ENCODE measurements at regions of chr17 and their contacts with region 1.

Region 1: DNA sequence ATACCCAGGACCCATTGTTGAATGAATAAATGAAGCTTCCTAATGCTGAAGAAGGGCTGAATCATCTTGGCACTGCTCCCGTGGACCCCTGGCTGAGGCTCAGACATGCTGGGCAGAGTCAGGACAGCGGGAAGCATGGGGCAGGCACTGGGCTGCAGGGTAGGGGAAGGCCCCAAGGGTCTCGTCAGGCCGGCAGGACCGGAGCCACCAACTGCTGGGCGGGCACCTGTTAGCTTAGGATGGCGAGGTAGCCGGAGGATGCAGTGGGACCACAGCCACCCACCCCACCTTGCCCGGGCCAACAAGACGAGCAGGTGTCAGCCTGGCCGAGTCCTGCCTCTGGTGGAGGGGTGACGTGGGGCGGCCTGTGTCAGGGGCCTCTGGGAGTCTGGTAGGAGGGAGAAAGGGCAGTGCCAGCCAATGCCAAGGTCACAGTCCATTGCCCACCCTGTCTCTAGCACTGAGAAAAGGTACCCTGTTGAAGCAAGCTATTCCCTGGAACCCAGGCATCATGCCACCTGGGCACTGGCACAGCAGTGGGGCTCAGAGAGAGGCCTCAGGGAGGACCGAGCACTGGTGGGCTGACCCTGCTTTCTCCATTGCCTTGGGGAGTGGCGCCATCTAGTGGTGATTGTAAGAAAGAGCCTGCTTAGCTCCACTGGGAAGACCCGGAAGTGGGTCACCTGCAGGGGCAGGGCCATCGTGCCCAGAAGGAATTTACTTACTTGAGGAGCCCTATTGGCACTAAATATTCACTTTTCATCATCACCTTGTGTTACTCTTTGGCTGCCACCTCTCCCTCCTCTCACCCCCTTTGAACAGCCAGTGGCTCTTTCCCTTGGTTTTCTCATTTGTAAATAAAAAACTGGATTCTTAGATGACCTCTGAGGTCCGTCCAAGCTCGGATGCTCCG is 3.0 kb upstream of the DLX3 start:
- DNase-seq: peak; percentile 58 to 91
- H3K4me3 ChIP-seq: no peak overlapping the region
- H3K27ac ChIP-seq: no peak overlapping the region
- H3K4me1 ChIP-seq: peaks cover 3 to 29% (median 11%) of the 10 kb centered on the region in 4 experiments; a peak in 6 of 7 replicates
- H3K27me3 ChIP-seq: peaks cover 32 to 66% (median 52%) of the 10 kb centered on the region in 4 experiments
- CTCF ChIP-seq: peak; percentile 72 to 94 (median 92)
- EP300 ChIP-seq: no peak
- POLR2A ChIP-seq: no peak
- RAD21 ChIP-seq: peak; percentile 99

Region 2: DNA sequence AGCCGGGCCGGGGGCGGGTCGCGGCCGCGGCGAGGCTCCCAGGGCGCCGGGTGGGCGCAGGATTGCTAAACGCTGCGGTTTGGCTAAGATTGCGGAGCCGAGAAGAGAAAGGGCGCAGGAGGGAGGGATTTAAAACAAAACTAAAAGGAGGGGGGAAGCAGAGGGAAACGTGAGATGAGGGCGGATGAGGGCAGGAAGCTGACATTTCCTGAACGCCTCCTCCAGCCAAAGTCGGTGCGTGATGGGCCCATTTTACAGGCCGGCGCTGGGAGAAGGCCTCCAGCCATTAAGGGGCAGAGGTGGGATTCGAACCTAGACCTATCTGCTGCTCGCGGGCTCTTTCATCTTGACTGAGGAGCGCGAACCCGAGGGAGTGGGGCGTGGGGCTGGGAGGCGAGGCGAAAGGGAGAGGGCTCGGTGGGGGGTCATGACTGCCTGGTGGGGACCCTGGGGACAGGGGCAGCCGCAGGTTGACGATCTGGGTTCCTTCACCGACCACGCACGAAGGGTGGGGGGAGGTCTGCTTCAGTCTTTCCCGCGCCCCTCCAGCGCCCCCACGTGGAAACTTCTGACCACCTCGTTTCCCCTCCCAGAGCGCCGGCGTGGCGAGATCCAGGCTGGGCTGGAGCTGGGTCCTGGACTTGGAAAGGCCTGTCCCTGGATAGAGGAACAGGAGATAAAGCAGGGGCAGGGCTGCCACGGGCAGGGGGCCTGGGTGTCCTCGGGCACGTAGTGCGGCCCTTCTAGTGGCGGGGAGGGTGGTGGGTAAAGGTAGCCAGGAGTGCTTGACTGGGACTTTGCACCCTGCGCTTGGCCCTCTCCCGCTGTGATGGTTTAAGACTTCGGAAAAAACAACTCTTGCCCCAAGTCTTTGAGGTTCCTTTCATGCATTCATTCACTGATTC is 146.4 kb before region 1 on chr17:
- CTCF ChIA-PET with region 1: interaction called, 547 read pairs
- POLR2A ChIA-PET with region 1: interaction called, 3 read pairs
- DNase-seq: peak in 1 of 2 experiments; percentile 95
- H3K4me3 ChIP-seq: peak overlapping the region; percentile 35 to 65 (median 51)
- H3K27ac ChIP-seq: no peak overlapping the region
- H3K4me1 ChIP-seq: peaks cover 3 to 10% (median 3%) of the 10 kb centered on the region in 4 experiments; a peak in 6 of 7 replicates
- H3K27me3 ChIP-seq: peaks cover 1 to 23% (median 12%) of the 10 kb centered on the region in 4 experiments; a peak in 6 of 7 replicates
- CTCF ChIP-seq: peak; percentile 71 to 74 (median 73)
- EP300 ChIP-seq: no peak
- POLR2A ChIP-seq: 0 out of 3 replicates have a peak, but pooled peaks of 1 of the 2 experiments have one; percentile 25
- RAD21 ChIP-seq: peak; percentile 63 to 80

Region 3: GRCh38 chr17:49899191-49899485 is 98.9 kb before region 1 on chr17:
- CTCF ChIA-PET with region 1: interaction called, 114 read pairs
- POLR2A ChIA-PET with region 1: interaction called, 3 read pairs
- DNase-seq: peak in 1 of 2 experiments; percentile 70
- H3K4me3 ChIP-seq: no peak overlapping the region
- H3K27ac ChIP-seq: no peak overlapping the region
- H3K4me1 ChIP-seq: peaks cover 4 to 19% (median 14%) of the 10 kb centered on the region in 4 experiments
- H3K27me3 ChIP-seq: peaks cover 5 to 33% (median 32%) of the 10 kb centered on the region in 4 experiments
- CTCF ChIP-seq: peak; percentile 39 to 80 (median 64)
- EP300 ChIP-seq: no peak
- POLR2A ChIP-seq: no peak
- RAD21 ChIP-seq: peak; percentile 63 to 79

Region 4: DNA sequence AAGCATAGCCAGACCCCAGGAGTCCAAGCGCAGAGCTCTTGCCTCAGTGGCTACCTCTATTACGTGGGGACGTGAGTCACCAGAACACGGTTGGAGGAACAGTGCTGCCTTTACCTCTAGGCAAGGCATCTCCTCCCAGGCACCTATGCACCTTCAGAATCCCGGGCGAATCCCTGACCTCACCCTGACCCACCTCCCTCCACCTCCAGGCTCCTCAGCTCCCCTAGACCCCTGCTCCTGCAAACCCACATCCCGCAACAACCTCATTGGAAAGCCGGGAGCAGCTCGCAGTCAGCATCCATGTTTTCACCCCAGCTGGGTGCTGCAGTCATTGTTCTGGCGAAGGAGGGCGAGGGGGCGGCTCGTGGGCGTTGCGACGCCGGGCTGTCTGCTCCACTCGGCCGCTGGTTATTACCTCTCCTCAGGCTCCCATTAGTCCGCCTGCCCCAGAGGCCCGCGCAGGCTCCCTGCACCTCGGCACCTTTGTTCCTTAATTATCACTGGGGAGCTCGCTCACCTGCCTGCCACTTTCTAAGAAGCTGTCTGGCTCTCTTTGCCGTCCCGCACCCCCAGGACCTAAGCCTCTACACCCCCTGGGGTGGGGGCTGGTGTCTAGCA is 53.7 kb before region 1 on chr17:
- CTCF ChIA-PET with region 1: interaction called, 275 read pairs
- POLR2A ChIA-PET with region 1: no interaction called
- DNase-seq: no peak
- H3K4me3 ChIP-seq: peak overlapping the region in 2 of 4 experiments; percentile 8 to 10; a peak in 2 of 8 replicates
- H3K27ac ChIP-seq: no peak overlapping the region
- H3K4me1 ChIP-seq: peaks cover 0 to 6% (median 3%) of the 10 kb centered on the region in 4 experiments; a peak in 3 of 7 replicates
- H3K27me3 ChIP-seq: peaks cover 0 to 8% (median 0%) of the 10 kb centered on the region in 4 experiments; a peak in 2 of 7 replicates
- CTCF ChIP-seq: no peak
- EP300 ChIP-seq: no peak
- POLR2A ChIP-seq: no peak
- RAD21 ChIP-seq: no peak

Region 5: GRCh38 chr17:49987681-49988441 is 10.2 kb before region 1 on chr17:
- CTCF ChIA-PET with region 1: interaction called, 398 read pairs
- POLR2A ChIA-PET with region 1: interaction called, 5 read pairs
- DNase-seq: peak in 1 of 2 experiments; percentile 51
- H3K4me3 ChIP-seq: peak overlapping the region in 1 of 4 experiments; percentile 24; a peak in 1 of 8 replicates
- H3K27ac ChIP-seq: no peak overlapping the region
- H3K4me1 ChIP-seq: peaks cover 1 to 17% (median 13%) of the 10 kb centered on the region in 4 experiments
- H3K27me3 ChIP-seq: peaks cover 31 to 71% (median 65%) of the 10 kb centered on the region in 4 experiments
- CTCF ChIP-seq: no peak
- EP300 ChIP-seq: no peak
- POLR2A ChIP-seq: no peak
- RAD21 ChIP-seq: no peak

Region 6: GRCh38 chr17:50105811-50106210 is 107.8 kb after region 1 on chr17:
- CTCF ChIA-PET with region 1: no interaction called
- POLR2A ChIA-PET with region 1: no interaction called
- DNase-seq: no peak
- H3K4me3 ChIP-seq: no peak overlapping the region
- H3K27ac ChIP-seq: no peak overlapping the region
- H3K4me1 ChIP-seq: peaks cover 0 to 16% (median 11%) of the 10 kb centered on the region in 4 experiments; a peak in 6 of 7 replicates
- H3K27me3 ChIP-seq: no peaks in the 10 kb centered on the region; a peak in 1 of 7 replicates
- CTCF ChIP-seq: no peak
- EP300 ChIP-seq: no peak
- POLR2A ChIP-seq: no peak
- RAD21 ChIP-seq: no peak

Region 7: GRCh38 chr17:50146230-50146926 is 148.3 kb after region 1 on chr17:
- CTCF ChIA-PET with region 1: no interaction called
- POLR2A ChIA-PET with region 1: no interaction called
- DNase-seq: no peak
- H3K4me3 ChIP-seq: no peak overlapping the region
- H3K27ac ChIP-seq: no peak overlapping the region
- H3K4me1 ChIP-seq: peaks cover 0 to 28% (median 13%) of the 10 kb centered on the region in 4 experiments; a peak in 6 of 7 replicates
- H3K27me3 ChIP-seq: peaks cover 2 to 17% (median 15%) of the 10 kb centered on the region in 4 experiments; a peak in 6 of 7 replicates
- CTCF ChIP-seq: peak in 2 of 3 experiments; percentile 4 to 6; a peak in 1 of 4 replicates
- EP300 ChIP-seq: no peak
- POLR2A ChIP-seq: no peak
- RAD21 ChIP-seq: no peak

Measured in H1 (cell line).